Heart right ventricle (tissue), 16 donors: ENCODE measurements at regions of chr3 and their contacts with region 1.

Region 1: DNA sequence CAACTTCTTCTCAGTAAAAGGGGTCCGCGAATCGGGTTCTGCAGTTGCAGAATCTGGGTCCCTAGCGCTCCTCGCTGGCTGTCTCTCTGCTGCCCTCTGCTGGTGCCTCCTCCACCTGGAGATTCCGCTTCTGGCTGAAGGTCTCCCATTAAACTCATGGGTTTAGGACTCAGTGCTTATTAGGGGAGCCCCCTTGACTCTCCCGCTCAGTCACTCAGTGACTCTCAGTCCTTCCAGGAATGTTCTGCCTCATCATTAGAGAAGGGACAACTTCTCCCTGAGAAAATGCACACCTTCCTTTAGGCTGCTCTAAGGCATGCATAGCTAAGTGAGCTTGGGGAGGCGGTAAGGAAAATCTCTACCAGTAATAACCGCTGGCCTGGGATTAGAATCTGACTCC is 7.1 kb downstream of the CPN2 start:
- DNase-seq: peak; percentile 75 to 78
- ATAC-seq: peak in 6 of 8 donors; percentile 42 to 79 (median 64)
- H3K4me3 ChIP-seq: no peak overlapping the region
- H3K27ac ChIP-seq: no peak overlapping the region
- H3K4me1 ChIP-seq: peaks cover 0 to 5% (median 0%) of the 10 kb centered on the region in 9 donors
- H3K27me3 ChIP-seq: peaks cover 0 to 25% (median 6%) of the 10 kb centered on the region in 7 donors
- CTCF ChIP-seq: peak; percentile 85 to 99 (median 97)

Region 2: GRCh38 chr3:193665370-193665989 is 678.5 kb before region 1 on chr3:
- intact Hi-C with region 1: loop called in 1 of 10 experiments (anchors 10 kb)
- DNase-seq: no peak
- ATAC-seq: no peak
- H3K4me3 ChIP-seq: no peak overlapping the region
- H3K27ac ChIP-seq: no peak overlapping the region
- H3K4me1 ChIP-seq: no peaks in the 10 kb centered on the region
- H3K27me3 ChIP-seq: no peaks in the 10 kb centered on the region
- CTCF ChIP-seq: peak; percentile 34 to 68 (median 54)

Region 3: DNA sequence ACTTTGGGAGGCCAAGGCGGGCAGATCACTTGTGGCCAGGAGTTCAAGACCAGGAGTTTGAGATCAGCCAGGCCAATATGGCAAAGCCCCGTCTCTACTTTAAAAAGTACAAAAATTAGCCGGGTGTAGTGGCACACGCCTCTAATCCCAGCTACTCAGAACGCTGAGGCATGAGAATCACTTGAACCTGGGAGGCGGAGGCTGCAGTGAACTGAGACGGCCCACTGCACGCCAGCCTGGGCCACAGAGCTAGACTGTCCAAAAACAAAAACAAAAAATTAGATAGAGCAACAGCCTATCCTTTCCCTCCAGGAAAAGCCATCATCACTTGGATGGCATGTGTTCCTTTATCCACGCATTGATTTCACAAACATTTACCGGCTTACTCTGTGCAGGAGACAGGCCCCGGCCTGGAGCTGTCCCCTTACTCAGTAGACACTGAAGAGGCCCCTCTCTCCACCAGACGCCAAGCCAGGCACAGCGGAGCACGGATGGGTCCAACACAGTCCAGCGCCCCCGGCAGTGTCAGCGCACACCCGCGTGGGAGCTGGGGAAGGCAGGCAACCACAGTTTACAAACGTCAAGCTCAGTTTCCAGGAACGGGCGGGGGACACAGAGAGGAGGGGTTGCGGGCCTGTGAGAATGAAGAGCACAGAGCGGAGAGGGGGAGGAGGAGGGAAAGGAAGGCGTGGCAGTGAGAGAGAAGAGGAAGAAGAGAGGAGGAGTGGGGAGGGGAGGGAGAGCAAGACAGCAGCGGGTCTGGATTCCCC is 52.0 kb after region 1 on chr3:
- intact Hi-C with region 1: loop called in 1 of 10 experiments (anchors 5 kb)
- DNase-seq: peak in 1 of 2 donors; percentile 51
- ATAC-seq: peak in 7 of 8 donors; percentile 55 to 74 (median 65)
- H3K4me3 ChIP-seq: peak overlapping the region in 7 of 10 donors; percentile 12 to 51 (median 37)
- H3K27ac ChIP-seq: peak overlapping the region in 1 of 10 donors; percentile 21
- H3K4me1 ChIP-seq: peaks cover 0 to 21% (median 16%) of the 10 kb centered on the region in 9 donors
- H3K27me3 ChIP-seq: peaks cover 0 to 71% (median 31%) of the 10 kb centered on the region in 7 donors
- CTCF ChIP-seq: no peak